ENCODE measurements at regions of chr20 and their contacts with region 1.

Region 1: DNA sequence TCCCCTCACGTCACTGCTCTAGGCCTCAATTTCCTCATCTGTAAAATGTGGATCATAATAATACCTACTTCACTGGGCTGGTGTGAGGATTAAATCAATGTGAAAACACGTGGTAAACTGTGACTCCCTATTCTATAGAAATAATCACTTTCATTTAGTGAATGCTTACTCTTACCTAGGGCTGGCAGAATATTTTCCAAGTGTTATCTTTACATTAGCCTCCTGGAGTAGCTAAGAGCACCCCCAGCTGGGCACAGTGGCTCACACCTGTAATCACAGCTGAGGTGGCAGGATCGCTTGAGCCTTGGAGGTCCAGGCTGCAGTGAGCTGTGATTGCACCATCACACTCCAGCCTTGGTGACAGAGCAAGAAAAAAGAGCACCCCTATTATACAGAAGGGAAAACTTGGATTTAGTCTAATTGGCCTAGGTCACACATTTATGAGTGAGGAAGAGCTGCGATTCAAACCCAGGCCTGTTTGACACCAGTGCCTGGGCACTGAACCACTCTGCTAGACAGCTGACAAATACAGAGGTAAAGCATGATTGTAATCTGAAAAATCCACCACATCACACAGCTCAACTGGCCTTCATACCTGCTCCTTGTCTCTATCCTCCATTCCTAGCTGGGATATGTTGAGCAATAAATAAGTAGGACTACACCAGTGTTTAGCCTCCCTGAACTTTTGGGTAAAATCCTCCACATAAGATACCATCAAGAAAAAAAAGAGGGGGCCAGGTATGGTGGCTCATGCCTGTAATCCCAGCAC is 1.4 kb upstream of the SNTA1 start:
- DNase-seq: peak; percentile 23
- H3K4me3 ChIP-seq: peak overlapping the region in 1 of 4 donors; percentile 63
- H3K27ac ChIP-seq: peak overlapping the region in 3 of 4 donors; percentile 76 to 91 (median 89)
- H3K4me1 ChIP-seq: peaks cover 9 to 29% (median 16%) of the 10 kb centered on the region in 4 donors
- H3K27me3 ChIP-seq: no peaks in the 10 kb centered on the region
- CTCF ChIP-seq: peak in 2 of 5 experiments; percentile 9 to 24
- EP300 ChIP-seq: no peak
- POLR2A ChIP-seq: no peak

Region 2: DNA sequence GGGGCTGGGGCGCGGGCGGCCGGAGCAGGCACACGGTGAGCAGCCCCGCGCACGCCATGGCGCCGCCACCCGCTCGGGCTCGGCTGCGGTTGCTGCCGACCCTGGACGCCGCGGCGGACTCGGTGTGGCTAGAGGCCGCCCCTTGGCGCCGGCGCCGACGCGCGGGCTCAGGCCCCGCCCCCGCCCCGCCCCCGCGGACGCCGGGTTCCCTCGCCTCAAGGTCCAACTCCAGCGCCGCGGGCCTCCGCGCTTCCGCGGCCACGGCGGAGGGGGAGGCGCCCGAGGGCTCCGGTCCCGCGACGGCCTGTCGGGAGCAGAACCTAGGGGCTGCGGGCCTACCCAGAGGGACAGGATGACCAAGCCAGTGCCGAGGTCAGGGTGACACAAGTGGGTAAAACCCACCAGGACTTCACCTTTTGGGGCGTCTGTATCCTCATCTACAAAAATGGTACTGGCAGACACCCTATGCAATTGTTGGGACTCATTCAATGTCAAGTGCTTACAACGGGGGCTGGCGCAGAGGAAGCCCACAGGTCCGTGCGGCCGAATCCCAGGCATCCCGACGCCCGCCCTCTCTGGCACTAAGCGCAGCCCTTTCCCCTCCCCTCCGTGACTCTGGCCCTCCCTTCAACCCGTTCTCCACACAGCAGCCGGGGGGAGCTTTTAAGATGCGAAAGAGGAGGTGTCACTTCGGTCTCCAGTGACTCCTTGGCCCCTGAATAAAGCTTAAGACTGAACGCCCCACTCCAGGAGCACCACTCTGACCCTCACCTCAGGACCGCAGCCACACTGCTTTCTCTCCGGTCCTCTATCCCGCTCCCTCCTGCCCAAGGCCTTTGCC is 229.5 kb after region 1 on chr20 and contains the start of gene NECAB3:
- in situ Hi-C with region 1: no loop called
- intact Hi-C with region 1: loop called (anchors 5 kb)
- DNase-seq: peak; percentile 90
- H3K4me3 ChIP-seq: peak within 1 kb of the TSS; percentile 72 to 91 (median 86)
- H3K27ac ChIP-seq: peak within 1 kb of the TSS; percentile 88 to 96 (median 90)
- H3K4me1 ChIP-seq: peaks cover 13 to 36% (median 34%) of the 10 kb centered on the region in 4 donors
- H3K27me3 ChIP-seq: no peaks in the 10 kb centered on the region
- CTCF ChIP-seq: no peak
- EP300 ChIP-seq: no peak
- POLR2A ChIP-seq: peak; percentile 57
- total RNA-seq, gene NECAB3: 26.1 to 180 (median 94.5) TPM